Heart right ventricle (tissue), 16 donors: ENCODE measurements at regions of chr10 and their contacts with region 1.

Region 1: DNA sequence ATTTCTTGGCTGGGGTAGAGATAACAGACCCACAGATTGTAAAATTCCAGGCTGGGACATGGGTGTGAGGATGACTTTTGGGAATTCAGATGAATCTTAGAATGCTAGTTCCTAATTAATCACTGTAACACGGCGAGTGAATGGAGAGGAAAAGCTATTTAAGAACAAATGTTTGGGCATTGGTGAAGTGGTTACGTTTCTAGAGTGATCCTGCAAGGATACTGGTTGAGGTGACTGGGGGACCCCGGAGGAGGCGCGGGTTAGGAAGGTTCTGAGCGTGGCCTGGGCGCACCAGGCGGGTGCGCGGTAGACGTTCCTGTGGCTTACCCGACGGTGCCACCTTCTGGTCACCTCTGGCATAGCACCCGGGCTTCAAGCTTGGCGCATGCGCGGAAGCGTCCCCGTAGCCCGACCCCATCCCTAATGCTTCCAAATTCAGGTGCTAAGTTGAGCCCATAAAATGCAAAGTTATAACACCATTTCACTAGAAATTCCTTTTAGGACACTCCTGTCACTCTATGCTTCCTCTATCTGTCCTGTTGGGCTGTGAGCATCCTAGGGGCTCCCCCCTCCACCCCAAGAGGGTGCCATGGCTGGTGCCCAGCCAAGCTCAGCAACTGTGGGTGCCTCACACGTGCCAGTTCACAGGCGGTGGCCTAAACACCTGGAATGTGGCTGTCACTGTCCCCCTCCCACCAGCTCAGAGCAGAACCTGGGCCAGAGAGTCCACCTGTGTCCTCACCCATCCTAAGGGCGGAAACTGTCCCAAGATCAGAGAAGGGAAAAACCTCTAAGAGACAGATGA is 104.5 kb downstream of the PTPRE start:
- DNase-seq: peak; percentile 80 to 89
- ATAC-seq: peak; percentile 85 to 91 (median 88)
- H3K4me3 ChIP-seq: no peak overlapping the region
- H3K27ac ChIP-seq: no peak overlapping the region
- H3K4me1 ChIP-seq: peaks cover 0 to 36% (median 22%) of the 10 kb centered on the region in 9 donors
- H3K27me3 ChIP-seq: no peaks in the 10 kb centered on the region
- CTCF ChIP-seq: peak; percentile 99 to 100 (median 99)

Region 2: GRCh38 chr10:127757033-127757432 is 254.3 kb before region 1 on chr10:
- intact Hi-C with region 1: no loop called
- DNase-seq: no peak
- ATAC-seq: no peak
- H3K4me3 ChIP-seq: no peak overlapping the region
- H3K27ac ChIP-seq: no peak overlapping the region
- H3K4me1 ChIP-seq: no peaks in the 10 kb centered on the region
- H3K27me3 ChIP-seq: peaks cover 0 to 12% (median 7%) of the 10 kb centered on the region in 7 donors
- CTCF ChIP-seq: no peak

Region 3: DNA sequence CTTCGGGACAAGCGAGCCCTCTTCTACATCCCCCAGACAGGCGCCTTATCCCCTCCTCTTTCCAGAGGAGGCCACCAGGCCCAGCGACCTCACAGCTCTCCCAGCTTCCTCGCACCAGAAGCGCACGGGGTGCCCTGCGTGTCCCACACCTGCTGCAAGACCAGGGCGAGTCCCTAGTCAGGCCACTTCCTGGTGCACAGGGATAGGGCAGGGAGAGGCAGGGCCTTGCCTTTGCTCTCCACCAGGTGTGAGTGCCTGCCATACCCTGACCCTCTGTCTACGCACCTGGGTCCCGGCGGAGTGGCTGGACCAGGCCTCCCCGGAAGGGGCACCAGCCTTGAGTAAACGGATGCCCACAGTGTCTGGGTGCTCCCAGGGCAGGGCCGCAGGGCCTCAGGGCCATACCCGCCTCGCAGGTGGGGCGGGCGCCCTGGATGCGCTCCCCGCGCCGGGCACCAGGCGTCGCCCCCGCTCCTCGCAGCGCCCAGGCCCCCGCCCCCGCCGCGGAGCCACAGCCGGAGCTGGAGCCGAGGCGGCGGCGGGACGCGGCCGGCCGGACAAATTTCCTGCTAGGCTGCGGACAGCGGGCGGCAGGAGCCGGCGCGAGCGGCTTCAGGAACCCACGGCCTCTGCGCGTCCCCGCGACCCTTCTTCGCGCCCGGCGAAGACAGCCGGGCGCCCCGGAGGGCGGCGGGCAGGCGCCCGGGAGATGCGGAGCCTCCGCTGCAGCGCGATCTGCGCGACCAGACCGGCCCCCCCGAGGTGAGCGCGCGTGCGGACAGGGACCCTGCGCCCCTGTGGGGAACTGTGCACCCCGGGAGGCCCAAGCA is 104.6 kb before region 1 on chr10 and contains the start of gene PTPRE:
- intact Hi-C with region 1: loop called (anchors 1 to 5 kb)
- DNase-seq: peak; percentile 70 to 83
- ATAC-seq: peak; percentile 76 to 92 (median 88)
- H3K4me3 ChIP-seq: peak within 1 kb of the TSS; percentile 66 to 92 (median 76)
- H3K27ac ChIP-seq: peak within 1 kb of the TSS; percentile 76 to 96 (median 90)
- H3K4me1 ChIP-seq: peaks cover 2 to 48% (median 33%) of the 10 kb centered on the region in 9 donors
- H3K27me3 ChIP-seq: peaks cover 0 to 6% (median 0%) of the 10 kb centered on the region in 7 donors
- CTCF ChIP-seq: peak; percentile 62 to 98 (median 81)
- total RNA-seq, gene PTPRE: 17.1 to 42.8 (median 23.0) TPM

Region 4: GRCh38 chr10:127977357-127978009 is 33.9 kb before region 1 on chr10:
- intact Hi-C with region 1: loop called in 1 of 10 experiments (anchors 2 kb)
- DNase-seq: peak; percentile 78 to 91
- ATAC-seq: peak; percentile 88 to 97 (median 95)
- H3K4me3 ChIP-seq: peak overlapping the region in 8 of 10 donors; percentile 2 to 30 (median 16)
- H3K27ac ChIP-seq: peak overlapping the region; percentile 59 to 90 (median 78)
- H3K4me1 ChIP-seq: peaks cover 10 to 61% (median 44%) of the 10 kb centered on the region in 9 donors
- H3K27me3 ChIP-seq: no peaks in the 10 kb centered on the region
- CTCF ChIP-seq: no peak